Naive thymus-derived CD8-positive, alpha-beta T cell (primary cell): ENCODE measurements at regions of chr4 and their contacts with region 1.

Region 1: DNA sequence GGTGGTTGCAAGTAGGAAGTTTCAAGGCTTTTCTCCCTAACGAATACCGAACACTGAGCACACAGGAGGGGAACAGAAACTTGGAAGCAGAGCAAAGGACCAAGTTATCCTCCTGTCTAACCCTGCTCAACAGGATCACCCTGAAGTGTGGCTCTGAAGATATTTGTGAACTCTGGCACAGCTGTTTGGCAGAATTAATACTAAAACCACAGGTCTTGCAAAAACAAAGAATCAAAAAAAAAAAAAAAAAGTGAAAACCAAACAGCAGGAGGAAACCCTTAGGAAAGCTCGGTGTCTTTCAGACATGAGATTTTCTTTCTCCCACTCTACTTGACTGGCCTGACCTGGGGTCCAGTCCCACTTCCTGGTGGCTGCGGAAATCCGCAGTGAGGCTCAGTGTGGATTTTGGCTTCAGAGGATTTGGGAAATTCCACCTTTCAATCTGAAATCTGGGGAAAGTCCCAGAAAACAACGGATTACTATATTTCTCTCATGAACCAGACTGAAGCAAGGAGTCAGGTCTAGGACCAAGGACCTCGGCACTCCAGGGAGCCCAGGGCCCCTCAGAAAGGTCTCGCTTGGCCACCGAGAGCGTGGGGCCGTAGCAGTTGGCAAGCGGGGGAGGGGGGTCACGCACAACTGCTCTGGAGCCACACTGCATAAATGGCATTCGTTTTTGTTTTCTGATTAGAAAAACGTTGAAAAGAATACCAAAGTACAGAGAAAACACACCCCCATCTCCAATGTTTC is 867 bp downstream of the TIFA start:
- DNase-seq: peak in 3 of 10 donors; percentile 13 to 30 (median 22)
- ATAC-seq: no peak
- H3K4me3 Mint-ChIP-seq: peak overlapping the region; percentile 87 to 96 (median 94)
- H3K27ac Mint-ChIP-seq: peak overlapping the region; percentile 86 to 97 (median 93)
- H3K4me1 Mint-ChIP-seq: peaks cover 27 to 88% (median 69%) of the 10 kb centered on the region in 4 donors
- H3K27me3 Mint-ChIP-seq: no peaks in the 10 kb centered on the region

Region 2: GRCh38 chr4:112231779-112232713 is 52.8 kb before region 1 on chr4 and contains the start of gene AP1AR:
- POLR2A ChIA-PET with region 1: interaction called, 11 read pairs
- DNase-seq: peak; percentile 55 to 87 (median 77)
- ATAC-seq: peak; percentile 58 to 62
- H3K4me3 Mint-ChIP-seq: peak within 1 kb of the TSS; percentile 91 to 99 (median 96)
- H3K27ac Mint-ChIP-seq: peak within 1 kb of the TSS; percentile 98 to 100 (median 99)
- H3K4me1 Mint-ChIP-seq: peaks cover 19 to 45% (median 43%) of the 10 kb centered on the region in 4 donors
- H3K27me3 Mint-ChIP-seq: peaks cover 0 to 1% (median 0%) of the 10 kb centered on the region in 5 donors
- polyA plus RNA-seq, gene AP1AR: 16.1 to 28.9 (median 16.8) TPM

Region 3: GRCh38 chr4:112296949-112297880 is 12.4 kb after region 1 on chr4 and contains the start of gene ALPK1:
- POLR2A ChIA-PET with region 1: interaction called, 26 read pairs
- DNase-seq: peak in 3 of 10 donors; percentile 40 to 53 (median 42)
- ATAC-seq: peak; percentile 95 to 97
- H3K4me3 Mint-ChIP-seq: peak within 1 kb of the TSS; percentile 80 to 93 (median 88)
- H3K27ac Mint-ChIP-seq: peak within 1 kb of the TSS; percentile 79 to 95 (median 93)
- H3K4me1 Mint-ChIP-seq: peaks cover 8 to 35% (median 24%) of the 10 kb centered on the region in 4 donors
- H3K27me3 Mint-ChIP-seq: no peaks in the 10 kb centered on the region
- polyA plus RNA-seq, gene ALPK1: 2.3 to 4.9 (median 3.8) TPM

Region 4: GRCh38 chr4:112302320-112303274 is 17.8 kb after region 1 on chr4:
- POLR2A ChIA-PET with region 1: interaction called, 33 read pairs
- DNase-seq: peak in 2 of 10 donors; percentile 37 to 43
- ATAC-seq: peak; percentile 87 to 90
- H3K4me3 Mint-ChIP-seq: no peak overlapping the region
- H3K27ac Mint-ChIP-seq: no peak overlapping the region
- H3K4me1 Mint-ChIP-seq: peaks cover 8 to 27% (median 23%) of the 10 kb centered on the region in 4 donors
- H3K27me3 Mint-ChIP-seq: no peaks in the 10 kb centered on the region

Region 5: GRCh38 chr4:112312610-112313239 is 27.9 kb after region 1 on chr4:
- POLR2A ChIA-PET with region 1: interaction called, 33 read pairs
- DNase-seq: no peak
- ATAC-seq: no peak
- H3K4me3 Mint-ChIP-seq: no peak overlapping the region
- H3K27ac Mint-ChIP-seq: peak overlapping the region in 3 of 10 donors; percentile 16 to 76 (median 43)
- H3K4me1 Mint-ChIP-seq: peaks cover 11 to 24% (median 23%) of the 10 kb centered on the region in 4 donors
- H3K27me3 Mint-ChIP-seq: no peaks in the 10 kb centered on the region